ENCODE measurements at regions of chr3 and their contacts with region 1.

Region 1: GRCh38 chr3:70982700-70983140 is 600.8 kb downstream of the FOXP1 start:
- DNase-seq: peak; percentile 82

Region 2: DNA sequence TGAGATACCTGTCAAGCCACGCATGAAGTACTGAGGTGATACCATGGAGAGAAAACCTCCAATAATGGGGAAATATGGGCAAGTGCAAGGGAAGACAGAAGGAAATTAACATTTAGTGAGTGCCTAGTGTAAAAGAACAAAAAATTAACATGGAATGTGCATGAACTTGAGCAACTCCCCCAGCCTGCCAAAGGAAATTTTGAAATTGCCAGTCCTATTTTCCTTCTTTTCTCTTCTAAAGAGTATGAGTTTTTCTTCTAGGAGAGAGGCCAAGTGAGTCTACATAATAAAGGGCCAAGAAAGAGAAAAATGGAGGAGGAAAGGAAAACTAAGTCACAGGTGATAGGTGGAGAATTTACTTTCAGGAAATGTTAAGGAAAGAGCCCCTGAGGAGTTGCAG is 67.9 kb before region 1 on chr3:
- intact Hi-C with region 1: loop called in 1 of 2 experiments (anchors 2 kb)
- DNase-seq: no peak